ENCODE measurements at regions of chr1 and their contacts with region 1.

Region 1: DNA sequence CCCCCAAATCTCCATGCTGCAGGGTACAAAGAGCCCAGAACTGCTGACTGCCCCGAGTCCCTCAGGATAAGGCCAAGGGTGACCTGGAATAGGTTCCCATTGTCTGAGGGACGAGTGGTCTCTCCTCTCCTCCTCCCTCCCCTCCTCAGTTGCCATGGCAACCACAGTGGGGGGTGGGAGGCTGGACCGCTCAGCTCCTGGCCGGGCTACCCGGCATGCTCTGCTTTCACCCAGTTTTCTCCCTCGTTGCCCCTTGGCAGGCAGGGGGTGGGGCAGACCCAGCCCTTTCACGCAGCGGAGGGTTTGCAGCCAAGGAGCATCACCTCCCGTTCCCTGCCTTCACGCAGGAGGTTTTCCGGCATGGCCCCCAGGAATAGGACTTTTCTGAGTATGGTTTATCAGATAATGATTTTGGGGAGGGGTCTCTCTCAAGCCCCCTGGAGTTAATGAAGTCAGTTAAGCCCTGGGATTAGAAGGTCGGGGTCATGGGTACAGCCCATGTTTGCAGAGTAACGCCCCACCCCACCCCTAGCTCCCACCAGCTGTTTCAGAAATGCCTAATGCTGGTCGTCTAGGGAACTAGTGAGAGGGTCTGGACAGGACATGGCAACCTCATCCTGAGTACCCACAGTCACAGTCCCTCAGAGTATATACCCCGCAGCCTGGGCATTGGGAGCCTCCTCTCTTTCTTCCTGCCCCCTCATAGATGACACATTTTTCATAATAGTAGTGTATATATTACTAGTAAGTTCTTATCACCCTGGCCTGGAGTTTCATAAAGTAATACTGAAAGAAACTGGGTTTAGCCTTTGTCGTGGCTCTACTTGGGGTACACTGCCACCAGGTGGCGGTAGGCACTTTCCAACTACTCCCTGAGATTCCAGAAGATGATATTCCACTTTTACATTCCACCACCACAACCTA is 20.7 kb downstream of the C1QB start:
- DNase-seq: peak; percentile 61
- H3K27ac ChIP-seq: no peak overlapping the region
- CTCF ChIP-seq: peak; percentile 70

Region 2: DNA sequence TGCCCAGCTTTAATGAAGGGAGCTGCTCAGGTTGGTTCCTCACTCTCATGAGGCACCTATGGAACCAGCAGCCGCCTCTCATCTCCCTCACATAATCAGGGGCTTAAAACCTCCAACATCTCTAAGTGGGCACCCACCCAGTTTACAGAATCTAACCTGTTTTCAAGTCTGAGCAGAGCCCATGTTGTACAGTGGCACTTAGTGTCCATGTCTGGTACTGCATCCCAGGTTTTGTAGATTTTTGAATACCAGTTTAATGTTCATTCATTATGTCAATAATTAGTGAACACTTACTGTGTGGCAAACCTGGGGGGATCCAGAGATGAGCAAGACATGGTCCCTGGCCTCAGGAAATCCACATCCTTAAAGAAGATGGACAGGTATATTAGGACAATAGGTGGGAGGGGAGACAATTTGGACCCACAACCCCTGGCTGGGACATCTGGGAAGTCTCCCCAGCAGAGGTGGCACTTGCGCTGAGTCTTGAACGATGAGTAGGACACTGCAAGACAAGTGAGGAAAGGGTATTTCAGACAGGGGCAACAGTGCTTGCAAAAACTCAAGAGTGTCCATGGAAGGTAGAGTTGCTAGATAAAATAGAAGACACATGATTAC is 215.6 kb after region 1 on chr1:
- CTCF ChIA-PET with region 1: interaction called, 10 read pairs
- POLR2A ChIA-PET with region 1: no interaction called
- DNase-seq: peak; percentile 69
- H3K27ac ChIP-seq: peak overlapping the region; percentile 72
- CTCF ChIP-seq: peak; percentile 89